ENCODE measurements at regions of chr20 and their contacts with region 1.

Region 1: DNA sequence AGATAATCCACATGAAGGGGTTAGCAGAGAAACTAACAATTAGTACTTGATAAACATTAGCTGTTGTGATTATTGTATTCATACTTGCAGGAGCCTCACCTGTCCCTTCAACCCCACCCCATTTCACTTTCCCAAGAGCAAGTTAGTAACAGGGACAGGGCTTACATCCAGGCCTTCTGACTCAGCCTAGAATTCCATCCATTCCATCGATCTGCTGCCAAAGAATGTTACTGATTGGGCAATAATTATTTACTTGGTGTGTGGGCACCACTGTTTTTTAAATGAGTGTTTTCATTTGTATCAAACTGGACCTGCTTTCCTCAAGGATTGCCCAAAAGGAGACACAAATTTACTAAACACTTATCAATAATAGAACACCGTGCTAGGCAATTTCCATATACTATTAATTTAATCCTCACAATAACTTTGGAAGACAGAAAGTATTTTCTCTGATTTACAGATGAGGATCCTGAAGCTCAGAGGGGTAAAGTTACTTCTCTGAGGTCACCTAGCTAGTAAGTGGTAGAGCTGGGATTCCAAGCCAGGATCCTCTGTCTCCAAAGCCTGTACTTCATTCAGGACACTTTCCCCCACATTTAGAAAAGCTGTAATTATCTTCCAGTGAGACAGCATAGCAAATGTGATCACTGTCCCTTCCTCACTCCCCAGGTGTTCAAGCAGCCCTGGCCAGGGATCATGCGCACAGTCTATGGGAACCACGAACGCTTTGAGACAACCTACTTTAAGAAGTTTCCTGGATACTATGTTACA is 32.8 kb downstream of the GSS start:
- DNase-seq: no peak
- H3K4me3 Mint-ChIP-seq: no peak overlapping the region
- H3K27ac Mint-ChIP-seq: no peak overlapping the region
- H3K4me1 Mint-ChIP-seq: peaks cover 29% of the 10 kb centered on the region
- H3K27me3 Mint-ChIP-seq: no peaks in the 10 kb centered on the region

Region 2: DNA sequence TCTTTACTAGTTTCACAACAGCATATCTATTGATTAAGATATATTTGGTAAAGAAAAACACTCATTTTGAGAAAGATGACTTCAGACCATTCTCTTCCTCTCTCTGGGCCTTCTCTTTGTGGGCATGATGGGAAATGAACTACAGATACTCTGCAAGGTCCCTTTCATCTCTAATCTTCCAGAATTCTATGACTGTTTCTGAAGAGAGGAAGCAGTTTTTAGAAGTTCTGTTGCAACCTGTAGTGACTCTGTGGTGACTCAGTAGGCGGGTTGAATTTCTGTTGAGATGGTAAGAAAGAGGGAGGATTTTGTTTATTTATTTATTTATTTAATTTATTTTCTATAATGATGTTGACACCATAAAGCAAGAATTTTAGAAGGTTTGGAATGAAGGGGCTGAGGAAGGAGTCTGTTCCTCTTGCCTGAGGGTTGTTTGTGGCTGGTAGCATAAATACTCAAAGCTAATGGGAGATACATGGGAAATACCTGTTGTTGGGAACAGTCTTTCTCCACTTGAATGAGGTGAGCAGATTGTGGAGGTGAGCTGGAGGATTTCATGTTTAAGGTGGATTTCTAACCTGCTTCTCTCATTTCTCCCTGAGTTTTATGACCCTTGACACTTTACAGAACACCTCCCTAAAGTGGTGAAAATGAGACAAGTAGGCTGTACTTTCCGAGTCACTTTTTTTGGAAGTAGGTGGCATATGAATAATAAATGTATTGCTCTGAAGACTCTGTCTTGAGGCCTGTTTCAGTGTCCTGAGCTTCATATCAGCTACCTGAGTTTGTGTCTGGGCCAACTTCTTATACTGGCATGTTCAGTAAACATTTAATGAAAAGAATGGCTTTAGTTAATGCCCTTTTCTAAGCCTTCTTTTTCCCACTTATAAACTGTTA is 31.4 kb before region 1 on chr20:
- CTCF ChIA-PET with region 1: interaction called, 4 read pairs
- intact Hi-C with region 1: loop called (anchors 1 kb)
- DNase-seq: peak; percentile 71
- H3K4me3 Mint-ChIP-seq: peak overlapping the region; percentile 16
- H3K27ac Mint-ChIP-seq: peak overlapping the region; percentile 87
- H3K4me1 Mint-ChIP-seq: peaks cover 48% of the 10 kb centered on the region
- H3K27me3 Mint-ChIP-seq: no peaks in the 10 kb centered on the region